Activated CD4-positive, alpha-beta T cell treated with anti-CD3 and anti-CD28 coated beads, Interleukin-2, amount 10 ng/mL, durations not matched to agents 24 days and 14 days (primary cell): ENCODE measurements at regions of chr5 and their contacts with region 1.

Region 1: GRCh38 chr5:143008809-143009521 is 238.8 kb downstream of the ARHGAP26 start:
- DNase-seq: peak; percentile 94
- H3K4me3 Mint-ChIP-seq: peak overlapping the region; percentile 36
- H3K27ac Mint-ChIP-seq: peak overlapping the region; percentile 93
- H3K4me1 Mint-ChIP-seq: peaks cover 73% of the 10 kb centered on the region
- H3K27me3 Mint-ChIP-seq: peaks cover 3% of the 10 kb centered on the region

Region 2: DNA sequence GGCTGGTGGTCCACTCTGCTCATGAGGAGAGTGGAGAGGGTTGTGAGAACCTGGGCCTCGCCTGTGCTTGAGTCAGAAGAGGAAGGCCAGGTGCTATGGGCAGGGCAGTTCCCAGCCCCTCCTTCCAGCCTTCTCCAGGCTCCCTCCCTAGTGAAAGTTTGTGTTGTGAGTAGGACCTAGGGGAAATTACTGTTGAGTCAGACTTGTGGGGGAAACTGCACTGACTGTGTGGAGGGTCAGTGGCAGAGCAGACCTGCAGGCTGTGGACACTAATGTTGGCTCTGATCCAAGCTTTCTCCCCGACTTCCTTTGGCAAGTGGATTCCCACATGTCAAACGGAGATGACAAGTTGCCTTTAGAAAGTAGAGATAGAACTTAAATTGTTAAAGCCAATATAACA is 136.2 kb before region 1 on chr5:
- intact Hi-C with region 1: no loop called
- DNase-seq: no peak
- H3K4me3 Mint-ChIP-seq: no peak overlapping the region
- H3K27ac Mint-ChIP-seq: no peak overlapping the region
- H3K4me1 Mint-ChIP-seq: peaks cover 3% of the 10 kb centered on the region
- H3K27me3 Mint-ChIP-seq: no peaks in the 10 kb centered on the region

Region 3: GRCh38 chr5:143037071-143037470 is 28.1 kb after region 1 on chr5:
- intact Hi-C with region 1: loop called (anchors 1 kb)
- DNase-seq: no peak
- H3K4me3 Mint-ChIP-seq: no peak overlapping the region
- H3K27ac Mint-ChIP-seq: peak overlapping the region; percentile 86
- H3K4me1 Mint-ChIP-seq: peaks cover 47% of the 10 kb centered on the region
- H3K27me3 Mint-ChIP-seq: no peaks in the 10 kb centered on the region

Region 4: GRCh38 chr5:143222287-143223231 is 213.6 kb after region 1 on chr5:
- intact Hi-C with region 1: loop called (anchors 2 kb)
- DNase-seq: peak; percentile 87
- H3K4me3 Mint-ChIP-seq: peak overlapping the region; percentile 71
- H3K27ac Mint-ChIP-seq: peak overlapping the region; percentile 95
- H3K4me1 Mint-ChIP-seq: peaks cover 56% of the 10 kb centered on the region
- H3K27me3 Mint-ChIP-seq: no peaks in the 10 kb centered on the region

Region 5: GRCh38 chr5:143515829-143516228 is 506.9 kb after region 1 on chr5:
- intact Hi-C with region 1: no loop called
- DNase-seq: no peak
- H3K4me3 Mint-ChIP-seq: no peak overlapping the region
- H3K27ac Mint-ChIP-seq: no peak overlapping the region
- H3K4me1 Mint-ChIP-seq: no peaks in the 10 kb centered on the region
- H3K27me3 Mint-ChIP-seq: peaks cover 2% of the 10 kb centered on the region

Region 6: GRCh38 chr5:143679777-143680176 is 670.8 kb after region 1 on chr5:
- intact Hi-C with region 1: loop called (anchors 2 kb)
- DNase-seq: no peak
- H3K4me3 Mint-ChIP-seq: no peak overlapping the region
- H3K27ac Mint-ChIP-seq: peak overlapping the region; percentile 72
- H3K4me1 Mint-ChIP-seq: peaks cover 18% of the 10 kb centered on the region
- H3K27me3 Mint-ChIP-seq: peaks cover 4% of the 10 kb centered on the region